Sigmoid colon (tissue), 7 donors: ENCODE measurements at regions of chr17 and their contacts with region 1.

Region 1: DNA sequence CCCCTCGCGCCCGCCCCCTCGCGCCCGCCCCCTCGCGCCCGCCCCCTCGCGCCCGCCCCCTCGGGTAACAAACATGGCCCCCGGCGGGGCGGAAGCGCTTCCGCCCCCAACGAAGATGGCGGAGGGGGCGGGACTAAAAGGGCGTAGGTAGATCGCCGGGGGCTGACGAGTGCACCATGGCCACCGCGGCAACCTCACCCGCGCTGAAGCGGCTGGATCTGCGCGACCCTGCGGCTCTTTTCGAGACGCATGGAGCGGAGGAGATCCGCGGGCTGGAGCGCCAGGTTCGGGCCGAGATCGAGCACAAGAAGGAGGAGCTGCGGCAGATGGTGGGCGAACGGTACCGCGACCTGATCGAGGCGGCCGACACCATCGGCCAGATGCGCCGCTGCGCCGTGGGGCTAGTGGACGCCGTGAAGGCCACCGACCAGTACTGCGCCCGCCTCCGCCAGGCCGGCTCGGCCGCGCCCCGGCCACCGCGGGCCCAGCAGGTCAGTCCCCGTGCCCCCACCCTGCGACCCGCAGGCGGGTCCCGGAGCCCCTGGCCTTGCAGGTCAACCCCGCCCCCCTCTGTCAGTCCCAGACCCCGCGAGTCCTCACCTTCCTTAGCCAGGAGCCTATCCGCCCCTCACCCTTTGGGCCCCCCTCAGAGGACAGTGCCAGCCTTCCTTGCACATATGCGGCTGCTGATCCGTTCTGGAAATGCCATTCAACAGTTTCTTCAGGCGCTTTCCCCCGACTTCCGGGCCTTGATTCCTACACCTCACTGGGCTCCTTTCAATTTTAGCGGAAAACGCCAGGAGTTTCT is at the start of gene COG1:
- DNase-seq: peak; percentile 93
- H3K4me3 ChIP-seq: peak within 1 kb of the TSS; percentile 76 to 97 (median 90)
- H3K27ac ChIP-seq: peak within 1 kb of the TSS; percentile 84 to 92 (median 88)
- H3K4me1 ChIP-seq: peaks cover 0 to 23% (median 20%) of the 10 kb centered on the region in 4 donors
- H3K27me3 ChIP-seq: no peaks in the 10 kb centered on the region
- CTCF ChIP-seq: no peak
- EP300 ChIP-seq: no peak
- POLR2A ChIP-seq: peak in 1 of 2 donors; percentile 29
- total RNA-seq, gene COG1: 18.5 to 33.5 (median 23.1) TPM

Region 2: DNA sequence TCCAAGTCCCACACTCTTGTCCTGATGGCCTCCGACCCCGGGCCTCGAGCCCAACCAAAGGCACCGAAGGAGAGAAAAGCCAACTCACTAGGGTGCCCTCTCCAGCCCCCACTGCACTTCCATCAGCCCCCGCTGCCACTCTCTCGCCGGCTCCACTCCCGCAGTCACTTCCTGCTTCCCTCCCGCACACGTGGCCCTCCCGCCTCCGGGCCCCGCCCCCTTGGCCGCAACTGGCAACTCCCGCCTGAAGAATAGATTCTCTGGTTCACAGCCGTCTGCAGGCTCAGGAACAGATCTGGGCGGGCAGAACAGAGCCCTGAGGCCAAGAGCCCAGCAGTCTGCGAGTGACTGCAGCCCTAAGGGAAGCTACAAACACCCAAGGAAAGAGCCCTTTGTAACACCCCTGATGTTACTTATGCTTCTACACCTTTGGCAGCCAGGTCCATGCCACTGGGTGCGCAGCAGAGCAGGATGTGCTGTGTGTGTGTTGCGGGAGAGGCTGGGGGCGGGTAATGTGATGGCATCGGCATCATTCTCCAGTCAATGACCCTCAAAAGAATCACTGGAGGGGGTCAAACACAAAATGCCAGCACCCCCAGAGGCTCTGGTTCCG is 100.5 kb before region 1 on chr17 and contains the start of gene SLC39A11:
- intact Hi-C with region 1: loop called (anchors 2 kb)
- DNase-seq: peak; percentile 96
- H3K4me3 ChIP-seq: peak within 1 kb of the TSS; percentile 61 to 74 (median 68)
- H3K27ac ChIP-seq: peak within 1 kb of the TSS; percentile 52 to 78 (median 74)
- H3K4me1 ChIP-seq: peaks cover 0 to 27% (median 17%) of the 10 kb centered on the region in 4 donors
- H3K27me3 ChIP-seq: no peaks in the 10 kb centered on the region
- CTCF ChIP-seq: no peak
- EP300 ChIP-seq: peak in 1 of 4 donors; percentile 3
- POLR2A ChIP-seq: no peak
- total RNA-seq, gene SLC39A11: 7.6 to 16.4 (median 8.0) TPM

Region 3: GRCh38 chr17:73231841-73232586 is 38.9 kb after region 1 on chr17:
- intact Hi-C with region 1: loop called (anchors 2 kb)
- DNase-seq: peak; percentile 97
- H3K4me3 ChIP-seq: peak overlapping the region; percentile 82 to 99 (median 94)
- H3K27ac ChIP-seq: peak overlapping the region; percentile 80 to 91 (median 88)
- H3K4me1 ChIP-seq: peaks cover 0 to 54% (median 46%) of the 10 kb centered on the region in 4 donors
- H3K27me3 ChIP-seq: no peaks in the 10 kb centered on the region
- CTCF ChIP-seq: peak in 2 of 4 experiments; percentile 28 to 31
- EP300 ChIP-seq: no peak
- POLR2A ChIP-seq: peak; percentile 19 to 66

Region 4: DNA sequence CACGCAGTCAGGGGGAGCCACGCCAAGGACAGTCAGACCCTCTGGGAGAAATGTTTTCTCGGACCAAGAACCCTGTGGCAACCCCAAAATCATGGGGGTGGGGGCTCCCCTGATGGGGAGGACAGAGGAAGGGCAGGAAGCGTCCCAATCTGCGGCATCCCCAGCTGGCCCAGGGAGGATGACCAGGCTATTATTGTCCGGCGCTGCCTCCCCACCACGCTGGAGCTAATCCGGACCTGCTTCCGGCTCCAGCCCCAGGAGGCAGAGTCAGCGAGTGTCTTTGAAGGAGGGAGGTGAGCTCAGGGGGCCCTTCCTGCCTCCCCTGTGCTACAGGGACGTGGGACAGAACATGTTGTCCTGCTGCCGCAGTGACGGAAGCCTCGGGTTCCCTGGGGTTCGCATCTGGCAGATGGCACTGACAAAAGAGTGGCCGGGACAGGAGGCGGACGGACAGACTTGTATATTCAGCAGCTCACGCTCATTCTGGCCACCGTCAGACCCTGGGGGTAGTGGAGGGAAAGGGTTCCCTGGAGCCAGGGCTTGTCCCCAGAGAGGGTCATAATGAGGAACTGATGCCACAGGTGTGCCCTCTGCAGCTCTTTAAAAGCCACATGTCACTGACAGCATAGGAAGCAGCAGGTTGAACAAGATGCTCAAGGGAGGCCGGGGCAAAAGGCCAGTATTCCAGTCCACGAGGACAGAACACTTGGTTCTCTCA is 173.0 kb after region 1 on chr17:
- intact Hi-C with region 1: loop called (anchors 5 kb)
- DNase-seq: no peak
- H3K4me3 ChIP-seq: no peak overlapping the region
- H3K27ac ChIP-seq: peak overlapping the region; percentile 49 to 66 (median 54)
- H3K4me1 ChIP-seq: peaks cover 0 to 29% (median 8%) of the 10 kb centered on the region in 4 donors
- H3K27me3 ChIP-seq: no peaks in the 10 kb centered on the region
- CTCF ChIP-seq: no peak
- EP300 ChIP-seq: peak in 3 of 4 donors; percentile 22 to 85 (median 57)
- POLR2A ChIP-seq: no peak